ENCODE measurements at regions of chr14 and their contacts with region 1.

Region 1: DNA sequence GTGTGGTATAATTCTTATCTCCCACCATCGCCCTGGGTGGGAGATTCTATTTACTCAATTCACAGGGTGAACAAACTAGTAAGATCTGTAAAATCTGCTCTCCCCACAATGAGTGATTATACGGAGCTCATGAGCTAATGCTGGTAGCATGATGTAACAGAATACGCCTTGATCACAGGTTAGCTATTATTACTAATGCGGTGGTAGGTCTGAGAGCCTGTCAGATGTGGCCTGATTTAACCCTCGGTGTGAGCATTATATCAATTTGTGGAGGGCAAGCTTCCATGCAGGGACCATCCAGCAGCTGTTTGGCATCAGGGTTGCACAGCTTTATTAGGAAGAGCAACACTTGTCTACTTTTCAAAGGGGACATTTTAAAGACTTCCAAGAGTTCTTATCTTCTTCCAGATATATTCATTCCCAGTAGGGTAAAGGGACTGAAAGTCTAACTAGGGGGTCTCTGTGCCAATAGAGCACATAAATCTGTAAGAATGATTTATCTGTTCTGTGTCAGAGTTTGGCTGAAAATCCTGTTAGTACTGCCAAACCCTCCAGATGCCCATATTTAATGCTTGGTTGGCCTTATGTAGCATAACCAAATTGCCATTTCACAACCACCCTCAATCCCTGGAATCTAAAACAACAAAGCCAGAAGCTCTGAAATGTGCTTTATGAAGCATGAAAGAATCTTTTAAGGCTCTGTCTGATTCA is 18.7 kb downstream of the TSHR start:
- DNase-seq: no peak
- ATAC-seq: no peak
- H3K4me3 ChIP-seq: no peak overlapping the region
- H3K27ac ChIP-seq: no peak overlapping the region
- H3K4me1 ChIP-seq: no peaks in the 10 kb centered on the region
- CTCF ChIP-seq: no peak
- EP300 ChIP-seq: no peak
- POLR2A ChIP-seq: no peak
- RAD21 ChIP-seq: no peak

Region 2: GRCh38 chr14:80954687-80955299 is 19.3 kb before region 1 on chr14:
- CTCF ChIA-PET with region 1: interaction called, 10 read pairs
- POLR2A ChIA-PET with region 1: no interaction called
- DNase-seq: peak; percentile 61 to 75
- ATAC-seq: peak; percentile 96
- H3K4me3 ChIP-seq: peak overlapping the region; percentile 52
- H3K27ac ChIP-seq: peak overlapping the region in 1 of 2 experiments; percentile 77; a peak in 4 of 6 replicates
- H3K4me1 ChIP-seq: no peaks in the 10 kb centered on the region
- CTCF ChIP-seq: peak; percentile 80
- EP300 ChIP-seq: no peak
- POLR2A ChIP-seq: no peak
- RAD21 ChIP-seq: peak; percentile 75 to 83